CD8-positive, alpha-beta T cell (primary cell): ENCODE measurements at regions of chr7 and their contacts with region 1.

Region 1: DNA sequence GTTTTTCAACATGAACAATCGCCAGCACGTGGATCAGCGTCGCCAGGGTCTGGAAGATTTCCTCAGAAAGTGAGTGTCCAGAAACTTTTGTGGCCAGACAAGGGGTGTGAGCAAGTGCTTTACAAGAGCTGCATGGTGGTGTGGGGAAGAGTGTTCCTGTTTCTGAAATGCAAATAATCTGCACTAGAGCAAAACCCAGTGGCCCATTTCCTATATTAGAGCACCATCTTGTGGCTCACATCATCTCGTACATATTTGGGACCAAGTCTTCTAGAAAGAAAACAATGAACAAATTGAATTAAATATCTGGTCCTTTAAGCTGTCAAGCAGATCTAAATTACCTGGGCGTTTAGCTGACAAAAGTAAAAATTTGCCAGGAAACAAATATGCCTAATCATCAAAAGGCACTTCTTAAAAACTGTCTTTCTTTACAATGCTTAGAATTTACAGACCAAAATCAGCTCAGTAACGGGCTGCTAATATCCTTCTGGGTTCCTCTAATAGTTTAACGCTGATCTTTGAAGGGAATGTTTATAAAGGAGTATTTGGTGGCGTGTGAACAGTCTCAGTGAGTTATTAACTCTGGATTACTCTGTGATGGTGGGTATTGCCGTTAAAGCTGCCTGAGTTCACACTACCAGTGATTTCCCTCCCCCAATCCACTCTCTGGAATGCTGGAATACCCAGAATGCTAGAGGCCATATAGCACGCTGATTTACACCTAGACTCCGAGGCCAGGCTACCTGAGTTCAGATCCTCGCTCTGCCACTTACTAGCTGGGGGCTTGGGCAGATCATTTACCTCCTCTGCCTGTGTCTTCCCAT is 73.6 kb downstream of the SNX10 start:
- DNase-seq: peak in 8 of 9 experiments; percentile 20 to 82 (median 53)
- ATAC-seq: peak; percentile 77
- H3K4me3 ChIP-seq: no peak overlapping the region
- H3K4me3 Mint-ChIP-seq: no peak overlapping the region
- H3K27ac ChIP-seq: no peak overlapping the region
- H3K27ac Mint-ChIP-seq: no peak overlapping the region
- H3K4me1 ChIP-seq: peaks cover 8% of the 10 kb centered on the region
- H3K4me1 Mint-ChIP-seq: peaks cover 11% of the 10 kb centered on the region
- H3K27me3 ChIP-seq: no peaks in the 10 kb centered on the region
- H3K27me3 Mint-ChIP-seq: no peaks in the 10 kb centered on the region
- CTCF ChIP-seq: peak; percentile 75

Region 2: DNA sequence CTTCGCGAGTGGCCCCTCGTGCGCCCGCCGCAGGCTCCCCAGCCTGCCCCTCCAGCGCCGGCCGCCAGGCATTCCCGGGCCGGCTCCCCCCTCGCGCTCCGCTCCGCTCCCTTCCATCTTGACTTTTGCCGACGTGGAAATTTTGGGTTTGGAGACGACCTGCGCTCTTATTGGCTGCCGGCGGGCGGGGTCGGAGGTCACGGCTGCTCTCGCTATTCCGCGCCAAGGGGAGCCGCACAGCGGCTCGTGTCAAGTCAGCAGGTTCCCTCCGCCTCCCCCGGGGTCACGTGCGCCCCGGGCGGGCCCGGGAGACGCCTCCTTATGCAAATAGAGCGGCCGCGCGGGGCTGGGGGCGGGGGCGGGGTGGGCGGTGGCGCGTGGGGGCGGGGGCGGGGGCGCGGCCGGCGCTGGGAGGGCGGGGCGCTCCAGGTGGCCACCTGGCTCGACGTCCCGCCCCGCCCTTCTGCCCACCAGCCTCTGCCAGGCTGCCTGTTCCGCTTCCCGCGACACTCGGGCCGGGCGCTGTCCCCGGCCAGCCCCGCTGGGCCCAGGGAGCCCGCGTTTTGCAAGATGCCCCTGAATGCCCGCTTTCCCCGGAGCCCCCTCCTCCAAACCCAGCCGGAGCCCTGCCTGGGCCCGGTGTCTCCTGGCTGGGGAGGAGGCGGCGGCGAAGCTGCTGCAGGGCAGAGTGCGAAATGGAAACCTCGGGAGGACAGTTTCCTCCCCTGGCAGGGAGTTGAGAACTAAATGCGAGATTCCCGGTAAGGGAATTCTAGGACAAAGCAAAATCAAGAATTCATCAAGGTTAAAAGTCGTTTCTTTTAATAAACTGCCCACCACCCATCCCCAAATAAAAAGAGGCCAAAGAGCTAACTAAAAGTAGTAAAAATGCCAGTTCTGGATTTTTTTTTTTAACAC is 414.0 kb before region 1 on chr7:
- CTCF ChIA-PET with region 1: interaction called, 3 read pairs
- POLR2A ChIA-PET with region 1: no interaction called
- intact Hi-C with region 1: loop called in 1 of 2 experiments (anchors 5 kb)
- DNase-seq: peak; percentile 70 to 93 (median 87)
- ATAC-seq: peak; percentile 97
- H3K4me3 ChIP-seq: peak overlapping the region; percentile 54 to 65
- H3K4me3 Mint-ChIP-seq: peak overlapping the region; percentile 90
- H3K27ac ChIP-seq: peak overlapping the region in 1 of 2 experiments; percentile 27
- H3K27ac Mint-ChIP-seq: peak overlapping the region; percentile 76
- H3K4me1 ChIP-seq: peaks cover 18% of the 10 kb centered on the region
- H3K4me1 Mint-ChIP-seq: peaks cover 22% of the 10 kb centered on the region
- H3K27me3 ChIP-seq: no peaks in the 10 kb centered on the region
- H3K27me3 Mint-ChIP-seq: peaks cover 2% of the 10 kb centered on the region
- CTCF ChIP-seq: no peak

Region 3: GRCh38 chr7:26193432-26194207 is 171.7 kb before region 1 on chr7:
- CTCF ChIA-PET with region 1: interaction called, 37 read pairs
- POLR2A ChIA-PET with region 1: no interaction called
- intact Hi-C with region 1: loop called in 1 of 2 experiments (anchors 1 kb)
- DNase-seq: peak in 1 of 9 experiments; percentile 42
- ATAC-seq: peak; percentile 15
- H3K4me3 ChIP-seq: no peak overlapping the region
- H3K4me3 Mint-ChIP-seq: peak overlapping the region; percentile 73
- H3K27ac ChIP-seq: peak overlapping the region in 1 of 2 experiments; percentile 55
- H3K27ac Mint-ChIP-seq: peak overlapping the region; percentile 90
- H3K4me1 ChIP-seq: peaks cover 82% of the 10 kb centered on the region
- H3K4me1 Mint-ChIP-seq: peaks cover 85% of the 10 kb centered on the region
- H3K27me3 ChIP-seq: no peaks in the 10 kb centered on the region
- H3K27me3 Mint-ChIP-seq: no peaks in the 10 kb centered on the region
- CTCF ChIP-seq: no peak

Region 4: DNA sequence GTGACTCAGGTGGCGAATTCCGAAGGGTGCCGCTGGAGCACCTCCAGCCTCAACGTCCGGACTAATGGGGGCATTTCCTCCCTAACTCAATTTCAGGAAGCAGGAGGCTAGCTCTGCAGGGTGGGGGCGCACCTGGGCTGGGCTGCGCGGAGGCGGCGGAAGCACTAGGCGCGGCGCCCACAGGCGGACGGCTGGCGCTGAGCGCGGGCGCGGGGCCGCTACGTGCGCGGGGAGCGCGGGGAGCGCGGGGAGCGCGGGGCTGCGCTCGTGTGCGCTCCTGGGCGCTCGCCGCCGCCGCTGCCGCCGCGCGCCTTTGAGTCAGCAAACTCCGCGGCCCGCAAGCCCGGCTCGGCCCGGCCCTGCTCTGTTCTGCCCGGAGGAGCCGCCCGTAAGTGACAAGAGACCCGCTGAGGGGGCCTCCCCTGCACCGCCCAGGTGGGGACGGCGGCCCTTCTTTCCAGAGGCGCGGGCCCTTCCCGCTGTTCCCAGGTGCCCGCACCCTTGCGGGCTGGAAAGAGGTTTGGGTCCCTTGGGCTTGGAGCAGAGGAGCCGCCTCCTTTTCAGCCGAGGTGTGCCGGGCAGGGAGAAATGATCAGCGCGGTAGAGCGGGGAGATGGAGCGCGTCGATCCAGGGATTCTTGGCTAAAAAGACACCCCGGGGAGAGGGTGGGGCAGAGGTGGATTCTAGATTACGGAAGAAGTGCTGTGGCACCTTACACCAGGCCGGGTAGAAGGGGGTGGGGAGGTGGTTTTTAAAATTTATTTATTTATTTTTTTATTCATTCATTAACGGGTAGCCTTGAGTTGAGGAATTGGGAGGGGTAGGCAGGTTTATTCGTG is 73.4 kb before region 1 on chr7 and contains the start of gene SNX10:
- CTCF ChIA-PET with region 1: interaction called, 13 read pairs
- POLR2A ChIA-PET with region 1: no interaction called
- intact Hi-C with region 1: loop called (anchors 1 to 2 kb)
- DNase-seq: peak; percentile 45 to 91 (median 72)
- ATAC-seq: peak; percentile 79
- H3K4me3 ChIP-seq: peak within 1 kb of the TSS; percentile 70 to 94
- H3K4me3 Mint-ChIP-seq: peak within 1 kb of the TSS; percentile 91
- H3K27ac ChIP-seq: peak within 1 kb of the TSS; percentile 43 to 78
- H3K27ac Mint-ChIP-seq: peak within 1 kb of the TSS; percentile 85
- H3K4me1 ChIP-seq: peaks cover 32% of the 10 kb centered on the region
- H3K4me1 Mint-ChIP-seq: peaks cover 38% of the 10 kb centered on the region
- H3K27me3 ChIP-seq: no peaks in the 10 kb centered on the region
- H3K27me3 Mint-ChIP-seq: no peaks in the 10 kb centered on the region
- CTCF ChIP-seq: no peak
- total RNA-seq, gene SNX10: 3.9 to 7.0 TPM

Region 5: GRCh38 chr7:26500749-26501352 is 135.6 kb after region 1 on chr7:
- CTCF ChIA-PET with region 1: no interaction called
- POLR2A ChIA-PET with region 1: no interaction called
- intact Hi-C with region 1: loop called in 1 of 2 experiments (anchors 1 kb)
- DNase-seq: peak in 2 of 9 experiments; percentile 16 to 43
- ATAC-seq: no peak
- H3K4me3 ChIP-seq: no peak overlapping the region
- H3K4me3 Mint-ChIP-seq: no peak overlapping the region
- H3K27ac ChIP-seq: no peak overlapping the region
- H3K27ac Mint-ChIP-seq: no peak overlapping the region
- H3K4me1 ChIP-seq: no peaks in the 10 kb centered on the region
- H3K4me1 Mint-ChIP-seq: no peaks in the 10 kb centered on the region
- H3K27me3 ChIP-seq: no peaks in the 10 kb centered on the region
- H3K27me3 Mint-ChIP-seq: peaks cover 4% of the 10 kb centered on the region
- CTCF ChIP-seq: peak; percentile 19